ENCODE measurements at regions of chr7 and their contacts with region 1.

Region 1: DNA sequence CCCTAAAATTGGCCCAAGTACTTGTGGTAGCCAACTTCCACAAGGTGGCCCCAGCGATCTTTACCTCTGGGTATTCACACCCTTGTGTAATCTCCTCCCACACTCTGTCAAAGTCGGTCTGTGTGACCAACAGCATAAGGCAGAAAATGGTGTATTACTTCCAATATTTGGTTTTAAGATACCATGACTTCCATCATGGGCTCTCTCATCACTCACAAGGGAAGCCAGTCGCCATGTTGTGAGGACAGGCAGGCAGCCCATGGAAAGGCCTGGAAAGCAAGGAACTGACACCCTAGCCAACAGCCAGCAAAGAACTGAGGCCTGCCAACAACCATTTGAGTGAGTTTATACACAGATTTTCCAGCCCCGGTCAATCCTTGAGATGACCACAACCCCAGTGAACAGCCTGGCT is 91.0 kb upstream of the KMT2E start:
- DNase-seq: peak; percentile 57
- H3K4me3 ChIP-seq: no peak overlapping the region
- CTCF ChIP-seq: peak; percentile 65

Region 2: GRCh38 chr7:104231054-104232046 is 691.7 kb before region 1 on chr7:
- CTCF ChIA-PET with region 1: interaction called, 28 read pairs
- POLR2A ChIA-PET with region 1: no interaction called
- DNase-seq: no peak
- H3K4me3 ChIP-seq: peak overlapping the region; percentile 23
- CTCF ChIP-seq: peak; percentile 79

Region 3: GRCh38 chr7:104883718-104884452 is 39.1 kb before region 1 on chr7:
- CTCF ChIA-PET with region 1: interaction called, 417 read pairs
- POLR2A ChIA-PET with region 1: no interaction called
- DNase-seq: no peak
- H3K4me3 ChIP-seq: no peak overlapping the region
- CTCF ChIP-seq: peak; percentile 96

Region 4: DNA sequence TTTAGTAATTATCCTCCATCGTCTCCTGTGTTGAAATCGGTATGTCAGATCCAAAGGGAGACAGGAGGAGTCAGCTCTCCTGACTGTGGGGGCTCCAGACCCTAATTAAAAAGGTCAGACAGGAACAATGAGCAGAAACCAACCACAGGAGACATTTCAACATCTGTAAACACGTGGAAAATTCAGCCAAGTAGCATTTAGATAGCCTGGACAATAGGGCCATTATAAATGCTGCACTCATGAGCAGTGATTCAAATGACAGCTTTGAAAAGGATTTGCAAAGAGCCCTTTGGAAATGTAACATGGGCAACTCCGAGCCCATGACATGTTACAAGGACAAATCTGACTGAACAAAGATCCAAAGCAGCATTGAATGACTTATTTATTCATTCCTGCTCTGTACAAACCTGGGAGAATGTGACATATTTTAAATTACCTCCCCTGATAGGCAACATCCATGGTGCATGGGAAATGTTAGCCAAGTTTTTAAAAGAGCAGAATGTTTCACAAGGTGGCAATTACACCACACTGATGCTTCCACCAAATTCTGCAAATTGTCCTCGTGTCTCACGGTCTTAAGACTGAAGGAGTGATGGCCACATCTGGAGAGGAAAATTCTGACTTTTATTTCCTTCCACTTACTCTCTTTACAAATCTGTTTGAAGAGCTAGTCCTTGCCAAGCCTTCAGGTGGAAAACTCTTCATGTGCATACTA is 22.3 kb before region 1 on chr7:
- CTCF ChIA-PET with region 1: interaction called, 15 read pairs
- POLR2A ChIA-PET with region 1: no interaction called
- DNase-seq: no peak
- H3K4me3 ChIP-seq: no peak overlapping the region
- CTCF ChIP-seq: no peak

Region 5: GRCh38 chr7:104983578-104984539 is 60.8 kb after region 1 on chr7:
- CTCF ChIA-PET with region 1: interaction called, 12 read pairs
- POLR2A ChIA-PET with region 1: interaction called, 3 read pairs
- DNase-seq: no peak
- H3K4me3 ChIP-seq: peak overlapping the region; percentile 67
- CTCF ChIP-seq: peak; percentile 70

Measured in AG04449 (cell line).